ENCODE measurements at regions of chr11 and their contacts with region 1.

Region 1: GRCh38 chr11:27506200-27507182 is at the start of gene LIN7C:
- DNase-seq: peak; percentile 95
- H3K4me3 Mint-ChIP-seq: peak within 1 kb of the TSS; percentile 97
- H3K27ac Mint-ChIP-seq: peak within 1 kb of the TSS; percentile 99
- H3K4me1 Mint-ChIP-seq: peaks cover 29% of the 10 kb centered on the region
- H3K27me3 Mint-ChIP-seq: no peaks in the 10 kb centered on the region
- total RNA-seq, gene LIN7C: 35.9 and 36.4 TPM in 2 replicates

Region 2: DNA sequence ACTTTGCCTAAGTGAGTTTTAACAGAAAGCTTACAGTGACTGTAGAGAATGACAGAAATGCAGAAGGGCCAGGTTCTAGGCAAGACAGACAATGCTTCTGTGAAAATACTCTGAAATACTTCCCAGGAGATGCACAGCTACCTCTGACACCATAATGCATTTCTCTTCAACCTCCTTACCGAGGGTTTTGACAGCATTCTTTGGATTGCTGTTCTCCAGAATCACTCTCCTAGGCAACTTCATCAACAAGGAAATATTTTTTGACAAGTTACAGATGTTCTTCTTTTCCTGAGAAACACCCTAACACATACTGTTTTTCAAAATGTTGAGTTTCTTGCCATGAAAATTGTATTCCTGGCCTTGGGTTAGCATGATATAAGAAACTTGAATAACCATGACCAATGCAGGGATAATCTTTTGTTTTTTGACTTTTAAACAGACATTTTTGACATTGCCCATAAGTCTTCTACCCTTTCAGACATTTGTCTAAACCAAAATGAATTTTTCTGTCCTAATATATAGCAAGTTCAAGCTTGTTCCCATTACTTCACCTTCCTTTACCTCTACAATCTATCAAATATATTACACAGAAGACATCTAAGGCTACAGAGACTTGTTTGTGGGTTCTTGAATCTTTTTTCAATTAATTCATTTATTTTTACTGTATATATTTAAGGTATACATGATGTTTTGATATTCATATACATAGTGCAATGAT is 251.6 kb before region 1 on chr11:
- intact Hi-C with region 1: no loop called
- DNase-seq: no peak
- H3K4me3 Mint-ChIP-seq: no peak overlapping the region
- H3K27ac Mint-ChIP-seq: no peak overlapping the region
- H3K4me1 Mint-ChIP-seq: no peaks in the 10 kb centered on the region
- H3K27me3 Mint-ChIP-seq: no peaks in the 10 kb centered on the region

Region 3: DNA sequence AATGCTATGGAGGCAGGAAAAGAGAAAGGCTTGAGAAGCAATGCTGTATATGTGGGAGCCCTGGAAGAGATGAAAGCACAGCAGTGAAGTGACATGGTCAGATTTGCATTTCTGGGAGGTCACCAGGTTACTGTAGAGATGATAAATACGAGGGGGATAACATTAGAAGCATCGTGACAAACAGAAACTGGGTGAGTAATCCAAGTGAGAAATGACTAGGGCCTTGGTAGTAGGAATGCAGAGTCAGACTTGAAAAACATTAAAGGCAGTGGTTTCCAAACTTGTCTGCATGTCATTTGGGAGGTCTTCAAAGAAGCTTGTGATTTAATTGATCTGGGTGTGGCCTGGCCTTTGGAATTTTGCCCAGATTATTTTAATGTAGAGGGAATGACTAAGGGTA is 187.4 kb before region 1 on chr11:
- intact Hi-C with region 1: loop called (anchors 1 kb)
- DNase-seq: no peak
- H3K4me3 Mint-ChIP-seq: no peak overlapping the region
- H3K27ac Mint-ChIP-seq: no peak overlapping the region
- H3K4me1 Mint-ChIP-seq: peaks cover 8% of the 10 kb centered on the region
- H3K27me3 Mint-ChIP-seq: no peaks in the 10 kb centered on the region

Region 4: DNA sequence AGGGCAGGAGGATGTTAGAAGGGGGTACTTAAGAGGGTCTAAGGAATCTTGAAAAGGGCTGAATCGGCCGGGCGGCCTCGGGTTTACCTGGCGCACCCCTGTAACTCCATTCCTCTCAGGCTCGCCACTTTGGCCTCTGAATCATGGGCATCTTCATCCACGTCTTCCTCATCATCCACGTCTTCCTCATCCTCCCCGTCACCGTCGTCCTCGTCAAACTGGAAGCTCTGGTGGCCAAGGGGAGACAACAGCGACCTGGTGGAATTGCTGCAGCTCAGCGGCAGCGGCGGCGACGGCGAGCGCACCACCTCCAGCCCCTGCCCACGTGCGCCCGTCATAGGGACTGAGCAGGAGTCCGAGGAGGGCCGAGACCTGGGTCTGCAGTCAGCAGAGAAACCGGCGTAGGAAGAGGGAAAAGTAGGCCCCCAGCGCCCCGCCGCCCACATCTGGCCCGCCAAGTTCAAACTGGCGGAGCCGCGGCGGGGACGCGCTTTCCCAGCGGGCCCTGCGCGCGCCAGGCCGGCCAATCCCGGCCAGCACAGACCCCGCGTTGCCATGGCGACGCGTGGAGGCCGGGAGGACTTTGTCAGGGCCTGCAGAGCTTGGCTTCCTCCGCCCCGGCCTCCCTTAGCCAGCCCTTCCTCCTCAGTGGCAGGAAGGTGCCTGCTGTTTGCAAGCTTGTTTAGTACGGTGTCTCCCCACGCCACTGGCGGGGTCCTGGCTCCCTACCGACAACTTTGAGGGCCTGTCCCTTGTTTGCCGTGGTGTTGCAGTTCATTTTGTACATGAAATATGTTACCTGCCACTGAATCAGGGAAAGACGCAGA is 143.5 kb before region 1 on chr11 and contains the start of gene CCDC34:
- intact Hi-C with region 1: loop called (anchors 1 kb)
- DNase-seq: peak; percentile 97
- H3K4me3 Mint-ChIP-seq: peak within 1 kb of the TSS; percentile 97
- H3K27ac Mint-ChIP-seq: peak within 1 kb of the TSS; percentile 92
- H3K4me1 Mint-ChIP-seq: peaks cover 21% of the 10 kb centered on the region
- H3K27me3 Mint-ChIP-seq: peaks cover 2% of the 10 kb centered on the region
- total RNA-seq, gene CCDC34: 10.1 and 12.7 TPM in 2 replicates

Region 5: GRCh38 chr11:27472398-27473016 is 34.0 kb before region 1 on chr11 and contains the start of gene LGR4:
- intact Hi-C with region 1: loop called (anchors 2 kb)
- DNase-seq: peak; percentile 83
- H3K4me3 Mint-ChIP-seq: peak within 1 kb of the TSS; percentile 83
- H3K27ac Mint-ChIP-seq: no peak within 1 kb of the TSS
- H3K4me1 Mint-ChIP-seq: peaks cover 3% of the 10 kb centered on the region
- H3K27me3 Mint-ChIP-seq: peaks cover 58% of the 10 kb centered on the region
- total RNA-seq, gene LGR4: not detected in 2 replicates

Region 6: GRCh38 chr11:27485930-27486773 is 20.3 kb before region 1 on chr11:
- intact Hi-C with region 1: loop called (anchors 2 kb)
- DNase-seq: peak; percentile 84
- H3K4me3 Mint-ChIP-seq: no peak overlapping the region
- H3K27ac Mint-ChIP-seq: no peak overlapping the region
- H3K4me1 Mint-ChIP-seq: no peaks in the 10 kb centered on the region
- H3K27me3 Mint-ChIP-seq: no peaks in the 10 kb centered on the region

Region 7: DNA sequence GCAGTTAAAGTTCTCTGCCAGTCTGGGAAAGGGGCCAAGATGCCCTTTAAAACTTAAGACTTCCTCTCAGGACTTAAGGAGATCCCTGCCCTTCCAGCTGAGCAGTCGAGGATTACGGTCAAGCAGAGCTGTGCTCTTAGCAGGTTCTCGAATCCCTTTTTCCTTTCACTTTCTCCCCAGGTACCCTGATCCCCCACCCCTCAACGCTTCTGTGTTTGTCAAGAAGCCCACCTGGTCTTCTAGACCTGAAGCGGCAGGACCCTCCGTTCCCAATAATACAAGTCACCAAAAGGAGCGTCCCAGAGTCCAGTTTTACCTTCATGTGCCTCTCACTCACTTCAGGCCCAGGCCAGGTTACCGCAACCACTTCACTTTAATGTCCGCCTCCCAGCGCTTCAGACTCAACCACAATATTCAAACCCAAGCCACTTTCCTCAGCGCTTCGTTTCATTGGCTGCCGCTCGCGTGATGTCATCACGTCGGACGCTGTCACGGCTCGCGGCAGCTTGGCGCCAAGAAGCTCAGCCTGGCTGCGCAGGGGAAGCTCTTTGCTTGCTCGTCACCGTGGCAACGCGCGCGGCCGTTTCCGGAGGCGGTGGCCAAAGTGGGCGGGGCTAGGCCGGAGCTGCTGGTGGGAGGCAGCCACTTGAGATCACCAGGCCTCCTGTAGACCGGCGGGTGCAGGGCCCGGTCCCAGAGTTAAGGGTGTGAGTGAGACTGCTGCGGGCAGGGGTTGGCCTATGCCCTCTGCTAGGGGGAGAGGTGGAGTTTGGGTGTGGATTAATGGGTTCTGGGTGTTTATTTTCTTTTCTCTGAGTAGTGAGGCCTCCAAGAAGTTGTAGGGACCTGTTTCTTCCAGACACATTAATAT is 601.5 kb after region 1 on chr11 and contains the starts of genes KIF18A and METTL15:
- intact Hi-C with region 1: loop called (anchors 1 kb)
- DNase-seq: peak; percentile 100
- H3K4me3 Mint-ChIP-seq: peak within 1 kb of the TSS; percentile 99
- H3K27ac Mint-ChIP-seq: peak within 1 kb of the TSS; percentile 100
- H3K4me1 Mint-ChIP-seq: peaks cover 58% of the 10 kb centered on the region
- H3K27me3 Mint-ChIP-seq: no peaks in the 10 kb centered on the region
- total RNA-seq, gene KIF18A: 15.4 and 15.5 TPM in 2 replicates
- total RNA-seq, gene METTL15: 16.9 and 18.3 TPM in 2 replicates